ENCODE measurements at regions of chr10 and their contacts with region 1.

Region 1: GRCh38 chr10:30529373-30529998 is 95.5 kb downstream of the MAP3K8 start:
- DNase-seq: peak; percentile 53 to 93 (median 68)
- ATAC-seq: peak; percentile 80
- H3K4me3 ChIP-seq: peak overlapping the region; percentile 62
- H3K4me3 Mint-ChIP-seq: peak overlapping the region; percentile 86
- H3K27ac ChIP-seq: peak overlapping the region; percentile 89 to 91
- H3K27ac Mint-ChIP-seq: peak overlapping the region; percentile 97
- H3K4me1 ChIP-seq: peaks cover 63% of the 10 kb centered on the region
- H3K4me1 Mint-ChIP-seq: peaks cover 64% of the 10 kb centered on the region
- H3K27me3 ChIP-seq: no peaks in the 10 kb centered on the region
- H3K27me3 Mint-ChIP-seq: no peaks in the 10 kb centered on the region
- CTCF ChIP-seq: no peak

Region 2: GRCh38 chr10:30398788-30399187 is 130.7 kb before region 1 on chr10:
- CTCF ChIA-PET with region 1: no interaction called
- POLR2A ChIA-PET with region 1: interaction called, 11 read pairs
- intact Hi-C with region 1: no loop called
- DNase-seq: peak in 1 of 14 experiments; percentile 27
- ATAC-seq: peak; percentile 26
- H3K4me3 ChIP-seq: no peak overlapping the region
- H3K4me3 Mint-ChIP-seq: no peak overlapping the region
- H3K27ac ChIP-seq: no peak overlapping the region
- H3K27ac Mint-ChIP-seq: no peak overlapping the region
- H3K4me1 ChIP-seq: peaks cover 18% of the 10 kb centered on the region
- H3K4me1 Mint-ChIP-seq: peaks cover 13% of the 10 kb centered on the region
- H3K27me3 ChIP-seq: no peaks in the 10 kb centered on the region
- H3K27me3 Mint-ChIP-seq: peaks cover 5% of the 10 kb centered on the region
- CTCF ChIP-seq: no peak

Region 3: GRCh38 chr10:30420266-30420665 is 109.2 kb before region 1 on chr10:
- CTCF ChIA-PET with region 1: interaction called, 3 read pairs
- POLR2A ChIA-PET with region 1: interaction called, 34 read pairs
- intact Hi-C with region 1: no loop called
- DNase-seq: no peak
- ATAC-seq: no peak
- H3K4me3 ChIP-seq: no peak overlapping the region
- H3K4me3 Mint-ChIP-seq: no peak overlapping the region
- H3K27ac ChIP-seq: no peak overlapping the region
- H3K27ac Mint-ChIP-seq: no peak overlapping the region
- H3K4me1 ChIP-seq: peaks cover 11% of the 10 kb centered on the region
- H3K4me1 Mint-ChIP-seq: peaks cover 16% of the 10 kb centered on the region
- H3K27me3 ChIP-seq: no peaks in the 10 kb centered on the region
- H3K27me3 Mint-ChIP-seq: no peaks in the 10 kb centered on the region
- CTCF ChIP-seq: no peak

Region 4: GRCh38 chr10:30456266-30456665 is 73.2 kb before region 1 on chr10:
- CTCF ChIA-PET with region 1: no interaction called
- POLR2A ChIA-PET with region 1: interaction called, 17 read pairs
- intact Hi-C with region 1: no loop called
- DNase-seq: peak in 8 of 14 experiments; percentile 8 to 63 (median 38)
- ATAC-seq: peak; percentile 66
- H3K4me3 ChIP-seq: peak overlapping the region; percentile 5
- H3K4me3 Mint-ChIP-seq: peak overlapping the region; percentile 54
- H3K27ac ChIP-seq: peak overlapping the region in 1 of 2 donors; percentile 32
- H3K27ac Mint-ChIP-seq: peak overlapping the region; percentile 84
- H3K4me1 ChIP-seq: peaks cover 33% of the 10 kb centered on the region
- H3K4me1 Mint-ChIP-seq: peaks cover 19% of the 10 kb centered on the region
- H3K27me3 ChIP-seq: no peaks in the 10 kb centered on the region
- H3K27me3 Mint-ChIP-seq: no peaks in the 10 kb centered on the region
- CTCF ChIP-seq: no peak

Region 5: GRCh38 chr10:30510169-30510930 is 19.1 kb before region 1 on chr10:
- CTCF ChIA-PET with region 1: no interaction called
- POLR2A ChIA-PET with region 1: no interaction called
- intact Hi-C with region 1: no loop called
- DNase-seq: peak in 2 of 14 experiments; percentile 52 to 66
- ATAC-seq: no peak
- H3K4me3 ChIP-seq: no peak overlapping the region
- H3K4me3 Mint-ChIP-seq: no peak overlapping the region
- H3K27ac ChIP-seq: no peak overlapping the region
- H3K27ac Mint-ChIP-seq: no peak overlapping the region
- H3K4me1 ChIP-seq: no peaks in the 10 kb centered on the region
- H3K4me1 Mint-ChIP-seq: no peaks in the 10 kb centered on the region
- H3K27me3 ChIP-seq: no peaks in the 10 kb centered on the region
- H3K27me3 Mint-ChIP-seq: no peaks in the 10 kb centered on the region
- CTCF ChIP-seq: no peak

Region 6: GRCh38 chr10:30591249-30591670 is 61.8 kb after region 1 on chr10:
- CTCF ChIA-PET with region 1: interaction called, 3 read pairs
- POLR2A ChIA-PET with region 1: interaction called, 5 read pairs
- intact Hi-C with region 1: loop called (anchors 2 kb)
- DNase-seq: peak in 13 of 14 experiments; percentile 8 to 82 (median 20)
- ATAC-seq: peak; percentile 74
- H3K4me3 ChIP-seq: no peak overlapping the region
- H3K4me3 Mint-ChIP-seq: no peak overlapping the region
- H3K27ac ChIP-seq: no peak overlapping the region
- H3K27ac Mint-ChIP-seq: no peak overlapping the region
- H3K4me1 ChIP-seq: peaks cover 3% of the 10 kb centered on the region
- H3K4me1 Mint-ChIP-seq: no peaks in the 10 kb centered on the region
- H3K27me3 ChIP-seq: no peaks in the 10 kb centered on the region
- H3K27me3 Mint-ChIP-seq: no peaks in the 10 kb centered on the region
- CTCF ChIP-seq: peak; percentile 90

Region 7: GRCh38 chr10:30722956-30723620 is 193.6 kb after region 1 on chr10:
- CTCF ChIA-PET with region 1: no interaction called
- POLR2A ChIA-PET with region 1: no interaction called
- intact Hi-C with region 1: no loop called
- DNase-seq: no peak
- ATAC-seq: no peak
- H3K4me3 ChIP-seq: no peak overlapping the region
- H3K4me3 Mint-ChIP-seq: no peak overlapping the region
- H3K27ac ChIP-seq: no peak overlapping the region
- H3K27ac Mint-ChIP-seq: no peak overlapping the region
- H3K4me1 ChIP-seq: peaks cover 7% of the 10 kb centered on the region
- H3K4me1 Mint-ChIP-seq: peaks cover 5% of the 10 kb centered on the region
- H3K27me3 ChIP-seq: no peaks in the 10 kb centered on the region
- H3K27me3 Mint-ChIP-seq: peaks cover 4% of the 10 kb centered on the region
- CTCF ChIP-seq: no peak

Region 8: DNA sequence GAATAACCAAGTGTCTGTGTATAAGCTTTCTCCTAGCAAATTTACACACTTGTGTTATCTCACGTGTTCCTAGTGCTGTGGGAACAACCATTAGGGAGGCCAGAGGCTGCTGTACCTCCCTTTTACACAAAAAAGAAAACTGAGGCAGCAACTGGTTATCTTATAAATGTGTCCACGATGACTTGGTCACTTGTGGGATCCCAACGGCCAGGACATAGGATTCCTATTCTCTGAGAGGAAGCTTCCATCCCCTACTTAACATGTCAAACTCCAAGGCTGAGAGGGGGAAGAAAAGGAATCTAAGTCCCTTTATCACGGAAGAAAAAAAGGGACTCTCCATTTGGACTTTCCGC is 501.7 kb after region 1 on chr10:
- CTCF ChIA-PET with region 1: no interaction called
- POLR2A ChIA-PET with region 1: no interaction called
- intact Hi-C with region 1: no loop called
- DNase-seq: no peak
- ATAC-seq: no peak
- H3K4me3 ChIP-seq: peak overlapping the region; percentile 74
- H3K4me3 Mint-ChIP-seq: peak overlapping the region; percentile 95
- H3K27ac ChIP-seq: peak overlapping the region; percentile 91 to 99
- H3K27ac Mint-ChIP-seq: peak overlapping the region; percentile 100
- H3K4me1 ChIP-seq: peaks cover 22% of the 10 kb centered on the region
- H3K4me1 Mint-ChIP-seq: peaks cover 18% of the 10 kb centered on the region
- H3K27me3 ChIP-seq: no peaks in the 10 kb centered on the region
- H3K27me3 Mint-ChIP-seq: no peaks in the 10 kb centered on the region
- CTCF ChIP-seq: no peak

Measured in CD4-positive, alpha-beta T cell (primary cell).